ENCODE measurements at regions of chr16 and their contacts with region 1.

Region 1: GRCh38 chr16:10876799-10877341 is at the start of gene CIITA:
- DNase-seq: peak; percentile 80
- H3K4me3 Mint-ChIP-seq: peak within 1 kb of the TSS; percentile 96
- H3K27ac Mint-ChIP-seq: peak within 1 kb of the TSS; percentile 87
- H3K4me1 Mint-ChIP-seq: peaks cover 93% of the 10 kb centered on the region
- H3K27me3 Mint-ChIP-seq: no peaks in the 10 kb centered on the region
- total RNA-seq, gene CIITA: 48.5 to 48.9 TPM

Region 2: GRCh38 chr16:10743610-10744393 is 133.1 kb before region 1 on chr16 and contains the start of gene NUBP1:
- CTCF ChIA-PET with region 1: interaction called, 13 read pairs
- POLR2A ChIA-PET with region 1: interaction called, 44 read pairs
- DNase-seq: peak; percentile 100
- H3K4me3 Mint-ChIP-seq: peak within 1 kb of the TSS; percentile 86
- H3K27ac Mint-ChIP-seq: peak within 1 kb of the TSS; percentile 97
- H3K4me1 Mint-ChIP-seq: peaks cover 57% of the 10 kb centered on the region
- H3K27me3 Mint-ChIP-seq: no peaks in the 10 kb centered on the region
- total RNA-seq, gene NUBP1: 29.4 to 31.5 TPM

Region 3: DNA sequence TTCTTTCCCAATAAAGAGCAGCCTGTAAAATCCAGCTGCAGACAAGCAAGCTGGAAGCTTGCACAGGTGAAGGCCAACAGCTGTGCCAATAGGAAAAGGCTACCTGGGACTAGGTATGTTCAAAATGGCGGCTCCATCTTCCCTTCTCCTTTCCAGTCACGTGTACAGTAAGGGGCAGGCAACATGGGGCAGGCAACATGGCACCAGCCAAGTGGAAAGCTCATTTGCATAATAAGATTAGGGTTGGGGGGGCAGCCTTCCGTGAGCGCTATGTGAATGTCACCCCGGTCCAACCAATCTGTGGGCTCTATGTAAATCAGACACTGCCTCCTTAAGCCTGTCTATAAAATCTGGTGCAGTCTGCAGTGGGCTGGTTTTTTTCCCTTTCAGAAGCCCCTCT is 89.6 kb before region 1 on chr16:
- CTCF ChIA-PET with region 1: no interaction called
- POLR2A ChIA-PET with region 1: no interaction called
- DNase-seq: no peak
- H3K4me3 Mint-ChIP-seq: no peak overlapping the region
- H3K27ac Mint-ChIP-seq: no peak overlapping the region
- H3K4me1 Mint-ChIP-seq: no peaks in the 10 kb centered on the region
- H3K27me3 Mint-ChIP-seq: peaks cover 42% of the 10 kb centered on the region

Region 4: DNA sequence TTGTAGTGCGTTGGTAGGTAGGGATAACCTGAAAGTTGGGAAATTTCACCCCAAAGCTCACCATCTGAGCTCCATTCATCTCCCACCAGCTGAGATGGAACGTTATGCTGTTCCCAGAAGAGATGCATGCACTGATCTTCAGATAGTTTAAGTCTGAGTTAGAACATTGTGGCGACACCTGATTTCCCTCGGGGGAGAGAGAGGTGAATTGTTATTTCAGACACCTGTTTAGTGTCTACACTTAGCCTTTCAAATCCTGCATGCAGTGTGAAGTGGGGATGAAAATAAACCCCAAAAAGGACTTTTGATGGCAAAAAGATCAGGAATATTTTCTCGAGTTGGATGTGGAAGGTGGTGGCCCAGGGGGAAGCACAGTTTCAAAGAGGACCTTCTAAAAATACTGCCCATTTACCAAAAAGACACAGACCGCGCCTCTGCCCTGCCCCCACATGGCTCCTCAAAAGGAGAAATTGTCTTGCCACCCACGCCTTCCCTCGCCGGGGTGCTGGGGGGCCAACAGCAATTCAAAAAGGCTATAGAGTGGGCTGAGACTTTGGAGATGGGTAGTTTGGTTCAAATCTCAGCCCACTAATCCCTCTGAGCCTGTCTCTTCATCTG is 11.6 kb after region 1 on chr16:
- CTCF ChIA-PET with region 1: interaction called, 6 read pairs
- POLR2A ChIA-PET with region 1: interaction called, 17 read pairs
- DNase-seq: no peak
- H3K4me3 Mint-ChIP-seq: no peak overlapping the region
- H3K27ac Mint-ChIP-seq: no peak overlapping the region
- H3K4me1 Mint-ChIP-seq: peaks cover 58% of the 10 kb centered on the region
- H3K27me3 Mint-ChIP-seq: no peaks in the 10 kb centered on the region

Region 5: GRCh38 chr16:10937068-10937859 is 60.4 kb after region 1 on chr16:
- CTCF ChIA-PET with region 1: interaction called, 7 read pairs
- POLR2A ChIA-PET with region 1: interaction called, 16 read pairs
- DNase-seq: peak; percentile 25
- H3K4me3 Mint-ChIP-seq: peak overlapping the region; percentile 51
- H3K27ac Mint-ChIP-seq: peak overlapping the region; percentile 45
- H3K4me1 Mint-ChIP-seq: peaks cover 83% of the 10 kb centered on the region
- H3K27me3 Mint-ChIP-seq: no peaks in the 10 kb centered on the region